ENCODE measurements at regions of chr1 and their contacts with region 1.

Region 1: DNA sequence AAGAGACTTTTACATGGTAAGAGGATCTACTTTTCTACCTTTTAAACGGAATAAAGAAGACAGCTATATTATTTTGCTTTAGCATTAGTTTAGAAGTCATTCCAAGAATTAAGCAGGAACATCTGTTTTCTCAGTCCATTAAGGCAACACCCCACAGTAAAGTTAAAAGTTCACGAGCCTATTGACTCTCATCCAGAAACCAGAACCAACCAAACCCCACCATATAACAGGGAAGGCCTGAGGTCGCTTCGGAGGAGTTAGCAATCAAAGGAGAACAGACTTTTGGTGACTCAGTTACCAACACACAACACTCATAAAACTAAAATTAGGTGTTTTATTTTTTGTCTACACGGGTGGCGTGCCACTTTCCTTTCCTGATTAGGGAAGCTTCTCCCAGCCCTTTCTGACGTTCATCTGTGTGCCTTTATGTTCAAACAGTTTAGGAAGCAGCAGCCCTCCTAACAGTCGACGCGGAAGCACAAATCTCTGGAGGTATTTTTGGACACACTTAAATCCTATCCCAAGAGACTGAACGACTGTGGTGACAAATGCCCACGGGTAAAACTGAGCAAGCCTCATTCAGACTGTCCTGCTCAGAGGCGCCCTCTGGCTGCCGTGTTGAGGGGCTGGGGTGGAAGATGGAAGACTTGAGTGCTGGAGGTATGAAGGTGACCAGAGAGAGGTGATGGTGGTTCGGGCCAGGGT is 8.6 kb upstream of the PLA2G2C start:
- DNase-seq: peak in 1 of 2 experiments; percentile 82
- H3K4me3 ChIP-seq: no peak overlapping the region; a peak in 1 of 8 replicates
- H3K27ac ChIP-seq: no peak overlapping the region
- H3K4me1 ChIP-seq: peaks cover 0 to 7% (median under 1%) of the 10 kb centered on the region in 4 experiments; a peak in 4 of 7 replicates
- H3K27me3 ChIP-seq: peaks cover 0 to 2% (median 0%) of the 10 kb centered on the region in 4 experiments; a peak in 2 of 7 replicates
- CTCF ChIP-seq: peak; percentile 83 to 92 (median 91)
- EP300 ChIP-seq: no peak
- POLR2A ChIP-seq: no peak
- RAD21 ChIP-seq: peak; percentile 67 to 77

Region 2: GRCh38 chr1:19918057-19918456 is 276.9 kb before region 1 on chr1:
- CTCF ChIA-PET with region 1: interaction called, 67 read pairs
- POLR2A ChIA-PET with region 1: no interaction called
- DNase-seq: peak; percentile 43 to 92
- H3K4me3 ChIP-seq: no peak overlapping the region
- H3K27ac ChIP-seq: no peak overlapping the region
- H3K4me1 ChIP-seq: peaks cover 0 to under 1% (median 0%) of the 10 kb centered on the region in 4 experiments; a peak in 1 of 7 replicates
- H3K27me3 ChIP-seq: no peaks in the 10 kb centered on the region
- CTCF ChIP-seq: peak; percentile 72 to 95 (median 87)
- EP300 ChIP-seq: no peak
- POLR2A ChIP-seq: no peak
- RAD21 ChIP-seq: peak; percentile 96 to 98

Region 3: DNA sequence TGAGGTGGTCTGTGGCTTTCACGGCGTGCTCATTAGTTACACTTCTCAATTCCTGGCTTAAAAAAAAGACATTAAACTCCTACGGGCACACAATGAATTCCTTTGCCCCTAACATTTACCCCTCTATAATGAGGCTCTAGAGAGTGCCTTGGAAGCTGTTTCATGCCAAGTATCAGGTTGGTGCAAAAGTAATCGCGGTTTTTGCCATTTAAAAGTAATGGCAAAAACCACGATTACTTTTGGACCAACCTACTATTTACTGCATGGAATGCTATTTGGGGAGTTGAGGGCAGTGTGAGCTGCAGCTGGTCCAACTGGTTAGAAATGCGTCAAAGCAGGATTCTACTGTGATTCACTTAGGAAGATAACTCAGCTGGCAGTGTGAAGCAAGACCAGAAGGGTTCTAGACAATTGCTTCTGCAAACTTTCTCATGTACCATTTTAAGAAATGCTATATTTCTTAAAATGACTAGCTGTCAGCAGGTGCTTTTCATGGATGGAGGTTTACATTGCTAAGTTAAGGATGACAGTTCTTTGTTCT is 12.6 kb after region 1 on chr1:
- CTCF ChIA-PET with region 1: interaction called, 23 read pairs
- POLR2A ChIA-PET with region 1: no interaction called
- DNase-seq: no peak
- H3K4me3 ChIP-seq: no peak overlapping the region
- H3K27ac ChIP-seq: no peak overlapping the region
- H3K4me1 ChIP-seq: peaks cover 0 to 2% (median 0%) of the 10 kb centered on the region in 4 experiments; a peak in 1 of 7 replicates
- H3K27me3 ChIP-seq: no peaks in the 10 kb centered on the region
- CTCF ChIP-seq: no peak
- EP300 ChIP-seq: no peak
- POLR2A ChIP-seq: no peak
- RAD21 ChIP-seq: no peak

Region 4: DNA sequence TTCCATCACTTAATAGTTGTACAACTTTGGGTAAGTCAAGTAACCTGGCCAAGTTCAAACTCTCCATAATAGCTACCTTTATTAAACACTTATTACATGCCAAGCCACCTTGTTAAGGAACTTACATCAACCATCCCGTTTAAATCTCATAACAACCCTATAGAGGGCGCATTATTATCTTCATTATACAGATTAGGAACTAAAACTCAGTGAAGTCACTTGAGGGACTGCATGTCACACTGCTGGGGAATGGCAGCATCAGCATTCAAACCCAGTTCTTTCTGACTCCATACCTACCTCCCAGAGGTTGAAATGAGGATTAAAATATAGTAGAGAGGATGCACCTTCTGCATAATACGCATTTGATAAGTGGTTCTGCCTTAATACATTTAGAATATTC is 38.5 kb after region 1 on chr1:
- CTCF ChIA-PET with region 1: no interaction called
- POLR2A ChIA-PET with region 1: no interaction called
- DNase-seq: no peak
- H3K4me3 ChIP-seq: no peak overlapping the region
- H3K27ac ChIP-seq: no peak overlapping the region
- H3K4me1 ChIP-seq: peaks cover 2 to 4% (median 3%) of the 10 kb centered on the region in 4 experiments; a peak in 3 of 7 replicates
- H3K27me3 ChIP-seq: no peaks in the 10 kb centered on the region; a peak in 1 of 7 replicates
- CTCF ChIP-seq: peak in 1 of 3 experiments; percentile 53; a peak in 2 of 4 replicates
- EP300 ChIP-seq: no peak
- POLR2A ChIP-seq: no peak
- RAD21 ChIP-seq: peak; percentile 24 to 28; a peak in 2 of 4 replicates

Region 5: GRCh38 chr1:20279509-20279908 is 84.6 kb after region 1 on chr1:
- CTCF ChIA-PET with region 1: no interaction called
- POLR2A ChIA-PET with region 1: no interaction called
- DNase-seq: no peak
- H3K4me3 ChIP-seq: no peak overlapping the region
- H3K27ac ChIP-seq: no peak overlapping the region
- H3K4me1 ChIP-seq: peaks cover 3 to 12% (median 8%) of the 10 kb centered on the region in 4 experiments
- H3K27me3 ChIP-seq: peaks cover 0 to 5% (median 0%) of the 10 kb centered on the region in 4 experiments; a peak in 2 of 7 replicates
- CTCF ChIP-seq: no peak
- EP300 ChIP-seq: no peak
- POLR2A ChIP-seq: no peak
- RAD21 ChIP-seq: no peak